Caco-2 (cell line): ENCODE measurements at regions of chr13 and their contacts with region 1.

Region 1: DNA sequence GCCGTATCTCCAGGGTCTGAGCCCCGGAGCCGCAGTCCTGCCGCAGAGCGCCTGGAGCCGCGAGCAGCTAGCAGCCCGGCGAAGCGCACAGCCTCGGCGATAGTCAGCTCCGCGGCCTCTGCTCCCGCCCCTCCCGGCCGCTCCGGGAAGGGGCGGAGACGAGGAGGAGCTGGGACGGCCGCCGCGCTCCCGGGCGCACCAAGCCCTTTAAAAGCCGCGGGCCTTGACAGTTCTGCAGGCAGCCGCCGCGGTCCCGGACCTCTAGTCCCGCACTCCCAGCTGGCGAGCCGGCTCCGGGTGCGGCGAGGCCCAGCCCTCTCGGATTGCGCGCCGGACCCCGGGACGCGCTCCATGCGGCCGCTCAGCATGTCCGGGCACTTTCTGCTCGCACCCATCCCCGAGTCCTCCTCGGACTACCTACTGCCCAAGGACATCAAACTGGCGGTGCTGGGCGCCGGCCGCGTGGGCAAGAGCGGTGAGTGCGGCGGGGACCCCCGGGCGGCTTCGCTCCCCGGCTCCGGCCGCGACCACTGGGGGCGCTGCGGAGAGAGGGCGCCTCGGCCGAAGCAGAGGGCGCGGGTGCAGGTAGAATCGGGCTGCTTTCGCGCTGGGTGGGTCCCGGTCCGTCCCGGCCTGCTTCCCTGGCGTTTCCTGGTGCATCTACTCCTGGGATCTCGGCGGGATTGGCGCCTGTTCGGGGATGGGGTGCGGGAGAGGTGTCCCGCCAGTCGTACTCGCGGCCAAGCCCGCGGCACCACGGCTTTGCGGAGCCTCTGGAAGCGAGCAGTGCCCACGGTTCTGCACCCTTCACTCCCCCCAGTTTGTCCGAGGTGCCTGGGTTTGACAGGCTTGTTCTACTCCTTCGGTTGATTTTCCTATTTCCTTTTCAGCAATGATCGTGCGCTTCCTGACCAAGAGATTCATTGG is at the start of gene RASL11A:
- DNase-seq: peak; percentile 87 to 91
- H3K4me3 ChIP-seq: peak within 1 kb of the TSS; percentile 82
- H3K4me3 Mint-ChIP-seq: peak within 1 kb of the TSS; percentile 81
- H3K27ac Mint-ChIP-seq: peak within 1 kb of the TSS; percentile 74
- H3K4me1 ChIP-seq: peaks cover 4% of the 10 kb centered on the region; the same call in 1 of the 2 replicates
- H3K4me1 Mint-ChIP-seq: peaks cover 7% of the 10 kb centered on the region
- H3K27me3 ChIP-seq: no peaks in the 10 kb centered on the region
- H3K27me3 Mint-ChIP-seq: no peaks in the 10 kb centered on the region
- CTCF ChIP-seq: peak; percentile 79 to 97
- total RNA-seq, gene RASL11A: 18.8 and 21.0 TPM in 2 replicates

Region 2: DNA sequence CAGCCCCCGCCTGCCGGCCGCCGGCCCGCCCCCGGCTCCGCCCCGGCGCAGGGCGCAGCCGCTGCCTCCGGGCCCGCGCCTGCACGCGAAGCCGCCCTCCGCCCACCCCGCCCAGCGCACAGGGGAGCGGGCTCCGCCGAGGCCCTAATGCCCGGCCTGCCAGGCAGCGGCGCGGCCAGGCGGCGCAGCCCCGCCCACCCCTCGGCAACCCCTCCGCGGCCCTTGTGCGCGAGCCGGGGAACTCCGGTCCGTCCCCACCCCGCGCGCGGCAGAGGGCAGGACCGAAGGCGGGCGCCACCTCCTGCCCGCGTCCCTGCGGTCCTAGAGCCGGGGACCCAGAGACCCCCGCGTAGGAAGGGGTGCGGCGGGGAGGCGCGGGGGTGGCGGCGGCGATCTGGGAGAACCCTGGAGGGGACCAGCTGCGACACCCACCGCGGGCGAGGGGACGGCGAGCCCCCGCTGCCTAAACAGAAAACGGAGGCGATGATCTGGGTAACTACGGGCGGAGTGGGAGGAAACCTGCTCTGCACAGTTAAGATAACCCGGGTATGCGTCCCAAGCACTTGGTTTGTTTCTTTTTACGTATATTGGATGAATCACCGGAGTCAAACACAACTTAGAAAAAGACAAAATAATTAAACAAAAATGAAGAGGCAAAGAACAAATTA is 98.9 kb before region 1 on chr13:
- CTCF ChIA-PET with region 1: interaction called, 3 read pairs
- POLR2A ChIA-PET with region 1: interaction called, 4 read pairs
- intact Hi-C with region 1: loop called (anchors 5 kb)
- DNase-seq: peak; percentile 93 to 95
- H3K4me3 ChIP-seq: peak overlapping the region; percentile 85
- H3K4me3 Mint-ChIP-seq: peak overlapping the region; percentile 95
- H3K27ac Mint-ChIP-seq: no peak overlapping the region
- H3K4me1 ChIP-seq: peaks cover 19% of the 10 kb centered on the region
- H3K4me1 Mint-ChIP-seq: peaks cover 27% of the 10 kb centered on the region
- H3K27me3 ChIP-seq: no peaks in the 10 kb centered on the region
- H3K27me3 Mint-ChIP-seq: no peaks in the 10 kb centered on the region
- CTCF ChIP-seq: no peak

Region 3: GRCh38 chr13:27242706-27243105 is 28.2 kb before region 1 on chr13:
- CTCF ChIA-PET with region 1: no interaction called
- POLR2A ChIA-PET with region 1: no interaction called
- intact Hi-C with region 1: no loop called
- DNase-seq: no peak
- H3K4me3 ChIP-seq: no peak overlapping the region
- H3K4me3 Mint-ChIP-seq: no peak overlapping the region
- H3K27ac Mint-ChIP-seq: no peak overlapping the region
- H3K4me1 ChIP-seq: no peaks in the 10 kb centered on the region
- H3K4me1 Mint-ChIP-seq: peaks cover 7% of the 10 kb centered on the region
- H3K27me3 ChIP-seq: no peaks in the 10 kb centered on the region
- H3K27me3 Mint-ChIP-seq: no peaks in the 10 kb centered on the region
- CTCF ChIP-seq: no peak

Region 4: GRCh38 chr13:27302643-27303262 is 31.9 kb after region 1 on chr13:
- CTCF ChIA-PET with region 1: no interaction called
- POLR2A ChIA-PET with region 1: no interaction called
- intact Hi-C with region 1: no loop called
- DNase-seq: no peak
- H3K4me3 ChIP-seq: no peak overlapping the region
- H3K4me3 Mint-ChIP-seq: no peak overlapping the region
- H3K27ac Mint-ChIP-seq: no peak overlapping the region
- H3K4me1 ChIP-seq: no peaks in the 10 kb centered on the region
- H3K4me1 Mint-ChIP-seq: no peaks in the 10 kb centered on the region
- H3K27me3 ChIP-seq: peaks cover 1% of the 10 kb centered on the region
- H3K27me3 Mint-ChIP-seq: peaks cover 7% of the 10 kb centered on the region
- CTCF ChIP-seq: no peak